Right cardiac atrium (tissue), 5 donors: ENCODE measurements at regions of chr7 and their contacts with region 1.

Region 1: GRCh38 chr7:2209146-2209960 is 23.4 kb downstream of the MAD1L1 start:
- DNase-seq: peak; percentile 77 to 90 (median 90)
- ATAC-seq: peak; percentile 58 to 75
- H3K4me3 ChIP-seq: no peak overlapping the region
- H3K27ac ChIP-seq: no peak overlapping the region
- H3K4me1 ChIP-seq: peaks cover 2% of the 10 kb centered on the region
- H3K27me3 ChIP-seq: no peaks in the 10 kb centered on the region

Region 2: GRCh38 chr7:1579481-1580421 is 629.6 kb before region 1 on chr7:
- intact Hi-C with region 1: loop called in 3 of 4 experiments (anchors 10 kb)
- DNase-seq: peak; percentile 78 to 90 (median 90)
- ATAC-seq: peak; percentile 91 to 92
- H3K4me3 ChIP-seq: no peak overlapping the region
- H3K27ac ChIP-seq: no peak overlapping the region
- H3K4me1 ChIP-seq: no peaks in the 10 kb centered on the region
- H3K27me3 ChIP-seq: no peaks in the 10 kb centered on the region

Region 3: DNA sequence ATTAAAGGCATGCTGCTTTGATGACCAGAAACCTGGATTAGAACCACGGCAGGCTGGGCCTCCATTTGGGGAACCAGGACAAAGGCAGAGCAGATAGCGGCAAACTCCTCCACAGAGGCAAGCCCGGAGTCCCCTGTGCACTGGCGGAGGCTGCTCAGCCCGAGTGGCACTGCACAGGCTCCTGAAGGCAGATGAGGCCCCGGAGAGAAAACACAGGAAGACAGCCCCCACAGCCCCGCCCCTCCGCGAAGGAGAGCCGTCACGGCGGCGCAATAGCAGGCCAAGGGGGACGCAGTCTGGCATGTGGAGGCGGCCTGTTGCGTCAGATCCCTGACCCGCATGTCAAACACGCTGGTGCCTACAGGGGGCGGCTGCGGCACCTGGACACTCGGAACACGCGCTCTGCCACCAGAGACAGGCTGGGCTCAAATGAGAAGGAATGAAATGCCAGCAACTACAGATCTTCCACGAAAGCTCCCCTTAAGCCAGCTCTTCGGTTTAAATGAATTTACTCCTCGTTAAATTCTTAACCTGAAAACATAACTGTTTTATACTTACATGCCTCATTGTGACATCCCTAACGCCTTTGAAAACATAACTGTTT is 105.1 kb before region 1 on chr7:
- intact Hi-C with region 1: loop called in 1 of 4 experiments (anchors 10 kb)
- DNase-seq: peak; percentile 89 to 96 (median 94)
- ATAC-seq: peak; percentile 83 to 86
- H3K4me3 ChIP-seq: no peak overlapping the region
- H3K27ac ChIP-seq: peak overlapping the region; percentile 13
- H3K4me1 ChIP-seq: peaks cover 11% of the 10 kb centered on the region
- H3K27me3 ChIP-seq: no peaks in the 10 kb centered on the region

Region 4: GRCh38 chr7:2148189-2148588 is 61.2 kb before region 1 on chr7:
- intact Hi-C with region 1: no loop called
- DNase-seq: peak in 2 of 3 donors; percentile 28 to 50
- ATAC-seq: no peak
- H3K4me3 ChIP-seq: no peak overlapping the region
- H3K27ac ChIP-seq: no peak overlapping the region
- H3K4me1 ChIP-seq: no peaks in the 10 kb centered on the region
- H3K27me3 ChIP-seq: no peaks in the 10 kb centered on the region

Region 5: GRCh38 chr7:2314209-2314955 is 105.0 kb after region 1 on chr7 and contains the start of gene SNX8:
- intact Hi-C with region 1: no loop called
- DNase-seq: peak; percentile 90 to 97 (median 96)
- ATAC-seq: peak; percentile 97 to 98
- H3K4me3 ChIP-seq: peak within 1 kb of the TSS; percentile 89
- H3K27ac ChIP-seq: peak within 1 kb of the TSS; percentile 74
- H3K4me1 ChIP-seq: no peaks in the 10 kb centered on the region
- H3K27me3 ChIP-seq: no peaks in the 10 kb centered on the region
- total RNA-seq, gene SNX8: 34.0 to 44.5 (median 39.7) TPM